ENCODE measurements at regions of chr4 and their contacts with region 1.

Region 1: DNA sequence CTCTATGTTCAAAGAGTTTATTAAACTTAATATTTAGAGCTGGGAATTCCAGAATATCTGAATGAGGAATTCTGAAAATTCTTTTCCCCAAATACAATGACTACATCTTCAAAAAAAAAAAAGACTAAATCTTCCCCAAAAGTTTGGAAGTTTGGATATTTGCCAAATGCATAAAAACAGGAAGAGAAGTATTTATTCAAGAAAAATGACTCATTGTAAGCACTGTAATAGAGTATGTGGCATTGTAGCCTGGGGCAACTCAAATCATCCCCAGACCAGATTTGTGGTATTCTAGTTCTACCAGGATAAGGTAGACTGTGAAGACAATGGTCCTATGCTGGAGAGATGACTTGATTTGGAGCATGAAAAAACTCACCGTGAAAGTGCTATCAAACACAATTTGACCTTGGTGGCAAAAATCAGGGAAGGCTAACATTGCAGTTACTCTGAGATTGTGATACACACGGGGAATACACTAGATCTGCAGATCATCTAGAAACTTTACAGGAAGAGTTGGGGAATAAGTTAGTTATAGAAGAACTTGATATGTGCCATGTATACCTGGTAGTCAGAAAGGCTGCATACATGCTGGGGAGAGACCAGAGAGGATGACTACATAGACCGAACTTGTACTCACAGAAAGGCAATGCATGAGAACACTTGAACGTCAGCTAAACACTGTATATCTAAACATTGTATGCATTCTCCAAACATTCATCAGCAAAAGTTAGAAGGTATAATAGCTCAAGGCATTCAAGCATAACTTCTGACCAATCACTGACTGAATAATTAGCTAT is 78.3 kb upstream of the PDHA2 start:
- DNase-seq: peak; percentile 92
- ATAC-seq: peak; percentile 98
- H3K4me3 ChIP-seq: no peak overlapping the region
- H3K27ac ChIP-seq: peak overlapping the region; percentile 48
- H3K4me1 ChIP-seq: peaks cover 33% of the 10 kb centered on the region
- H3K27me3 ChIP-seq: no peaks in the 10 kb centered on the region
- CTCF ChIP-seq: no peak

Region 2: DNA sequence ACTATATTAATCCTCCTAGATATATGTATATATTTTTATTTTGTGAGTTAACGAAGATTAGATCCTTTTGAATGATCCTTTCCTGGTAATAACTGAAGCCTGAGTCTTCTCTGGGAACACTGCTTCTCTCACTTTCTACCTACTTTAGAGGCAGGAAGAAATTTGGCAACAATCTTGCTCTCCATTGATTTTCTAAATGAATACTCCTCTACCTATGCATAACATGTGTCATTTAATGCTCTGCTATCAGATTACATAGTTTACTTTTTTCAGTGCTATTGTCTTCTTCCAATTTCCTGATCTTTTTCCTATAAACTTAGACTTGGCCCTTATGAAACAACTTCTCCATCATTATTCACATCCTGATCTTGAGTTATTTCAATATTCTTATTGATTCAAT is 17.8 kb after region 1 on chr4:
- CTCF ChIA-PET with region 1: no interaction called
- POLR2A ChIA-PET with region 1: no interaction called
- intact Hi-C with region 1: loop called (anchors 1 kb)
- DNase-seq: peak; percentile 81
- ATAC-seq: peak; percentile 89
- H3K4me3 ChIP-seq: no peak overlapping the region
- H3K27ac ChIP-seq: peak overlapping the region; percentile 50
- H3K4me1 ChIP-seq: peaks cover 13% of the 10 kb centered on the region
- H3K27me3 ChIP-seq: no peaks in the 10 kb centered on the region
- CTCF ChIP-seq: no peak